ENCODE measurements at regions of chr5 and their contacts with region 1.

Region 1: DNA sequence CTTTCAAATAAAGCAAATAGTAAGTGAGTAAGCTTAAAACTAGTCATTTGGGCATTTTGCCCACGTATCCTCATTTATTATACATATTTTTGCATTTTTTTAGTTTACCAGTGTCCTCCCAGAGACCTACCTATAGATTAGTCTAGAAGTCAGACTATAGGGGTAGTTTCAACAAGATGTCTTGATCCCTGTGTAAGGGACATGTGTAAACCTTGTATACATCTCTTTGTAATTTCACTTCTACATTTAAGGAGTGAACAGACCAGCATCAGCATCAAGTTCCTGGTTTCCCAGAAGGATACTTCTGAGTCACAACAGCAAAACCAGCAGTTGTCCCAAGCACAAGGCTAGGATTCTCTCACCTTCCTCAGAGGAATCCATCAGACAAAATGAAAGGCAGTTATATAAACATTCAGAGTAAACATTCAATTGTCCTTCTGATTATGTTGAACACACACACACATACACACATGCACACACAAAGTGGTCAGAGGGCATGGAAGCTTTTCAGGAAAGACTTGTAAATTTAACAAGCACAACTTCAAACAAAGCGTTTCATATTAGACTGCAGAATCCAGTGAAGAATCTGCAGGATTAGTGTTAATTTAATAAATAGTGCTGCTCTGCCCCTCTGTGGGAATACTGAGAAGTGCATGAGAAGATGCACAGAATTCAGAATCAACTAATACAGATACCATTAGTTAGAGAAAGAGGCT is 55.4 kb downstream of the HINT1 start:
- DNase-seq: peak in 2 of 5 donors; percentile 32 to 35
- H3K4me3 ChIP-seq: no peak overlapping the region
- H3K4me3 Mint-ChIP-seq: no peak overlapping the region
- H3K27ac ChIP-seq: no peak overlapping the region
- H3K27ac Mint-ChIP-seq: no peak overlapping the region
- H3K4me1 ChIP-seq: no peaks in the 10 kb centered on the region
- H3K4me1 Mint-ChIP-seq: peaks cover 3 to 8% (median 8%) of the 10 kb centered on the region in 3 donors
- H3K27me3 ChIP-seq: no peaks in the 10 kb centered on the region
- H3K27me3 Mint-ChIP-seq: no peaks in the 10 kb centered on the region

Region 2: DNA sequence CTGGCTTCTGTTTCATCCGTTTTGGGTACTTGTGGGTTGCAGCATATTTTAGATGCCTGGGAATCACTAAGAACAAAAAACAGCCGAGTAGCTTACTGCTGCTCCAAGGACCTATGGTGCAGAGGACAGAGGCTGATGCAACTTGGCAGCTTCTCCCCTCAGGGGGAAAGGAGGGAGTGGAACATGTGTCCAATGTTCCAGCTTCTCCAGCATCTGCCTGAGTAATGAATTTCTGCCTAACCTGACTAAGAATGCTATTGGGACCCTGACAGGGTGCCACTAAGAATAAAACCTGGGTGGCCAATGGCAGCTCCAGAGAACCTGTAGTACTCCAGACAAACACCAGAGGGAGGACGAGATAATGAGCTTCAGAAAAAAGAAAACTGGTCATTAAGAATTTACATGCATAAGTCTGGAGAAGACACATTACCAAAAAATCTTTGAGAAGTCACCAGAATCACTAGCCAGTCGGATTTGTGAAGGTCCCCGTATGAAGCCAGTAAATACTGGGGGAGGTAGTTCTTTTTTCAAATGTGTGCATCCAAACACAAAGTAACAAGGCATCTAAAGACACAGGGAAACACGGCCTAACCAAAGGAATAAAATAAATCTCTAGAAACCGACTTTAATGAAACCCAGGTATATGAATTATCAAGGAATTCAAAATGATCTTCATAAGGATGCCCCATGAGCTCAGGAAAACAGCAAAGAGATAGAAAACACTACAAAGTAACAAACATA is 238.2 kb before region 1 on chr5:
- CTCF ChIA-PET with region 1: interaction called, 21 read pairs
- POLR2A ChIA-PET with region 1: no interaction called
- DNase-seq: peak; percentile 7 to 54 (median 24)
- H3K4me3 ChIP-seq: no peak overlapping the region
- H3K4me3 Mint-ChIP-seq: no peak overlapping the region
- H3K27ac ChIP-seq: no peak overlapping the region
- H3K27ac Mint-ChIP-seq: peak overlapping the region in 2 of 8 donors; percentile 5 to 21
- H3K4me1 ChIP-seq: no peaks in the 10 kb centered on the region
- H3K4me1 Mint-ChIP-seq: no peaks in the 10 kb centered on the region
- H3K27me3 ChIP-seq: no peaks in the 10 kb centered on the region
- H3K27me3 Mint-ChIP-seq: no peaks in the 10 kb centered on the region

Region 3: DNA sequence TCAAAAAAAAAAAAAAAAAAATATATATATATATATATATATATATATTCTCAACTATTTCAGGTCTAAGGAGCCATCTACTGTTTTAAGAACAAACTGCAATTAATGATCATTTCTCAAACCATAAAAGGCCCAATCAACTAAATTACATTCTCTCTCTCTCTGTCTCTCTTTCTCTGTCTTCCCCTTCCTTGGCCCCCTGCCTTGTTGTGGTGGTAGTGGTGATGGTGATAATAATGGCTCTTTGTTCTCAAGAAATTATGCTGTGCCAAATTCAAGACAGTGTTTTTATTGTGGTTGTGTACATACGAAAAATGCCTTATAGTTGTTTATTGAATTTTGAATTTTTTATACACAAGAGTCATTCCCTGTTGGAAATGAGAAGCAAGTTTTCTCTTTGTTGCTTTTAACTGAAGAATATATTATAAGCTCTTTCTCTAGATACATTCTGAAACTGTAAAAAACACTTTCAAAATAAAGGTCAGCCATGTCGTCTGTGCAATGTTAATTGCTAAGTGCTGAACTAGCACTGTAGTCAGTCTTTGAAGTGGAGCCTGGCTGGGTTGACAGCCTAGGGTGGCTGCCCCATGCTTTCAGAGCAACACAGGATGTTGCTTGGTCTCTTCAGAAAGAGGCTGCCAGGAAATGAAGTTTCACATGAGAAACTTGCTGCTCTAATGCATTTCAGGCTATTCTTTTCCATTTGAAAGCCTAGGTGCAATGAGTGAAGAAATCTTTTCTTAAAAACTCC is 40.6 kb before region 1 on chr5:
- CTCF ChIA-PET with region 1: no interaction called
- POLR2A ChIA-PET with region 1: no interaction called
- DNase-seq: peak; percentile 26 to 77 (median 63)
- H3K4me3 ChIP-seq: no peak overlapping the region
- H3K4me3 Mint-ChIP-seq: peak overlapping the region; percentile 66 to 87 (median 71)
- H3K27ac ChIP-seq: no peak overlapping the region
- H3K27ac Mint-ChIP-seq: peak overlapping the region; percentile 86 to 95 (median 90)
- H3K4me1 ChIP-seq: peaks cover 35% of the 10 kb centered on the region
- H3K4me1 Mint-ChIP-seq: peaks cover 49 to 57% (median 54%) of the 10 kb centered on the region in 3 donors
- H3K27me3 ChIP-seq: no peaks in the 10 kb centered on the region
- H3K27me3 Mint-ChIP-seq: no peaks in the 10 kb centered on the region

Region 4: GRCh38 chr5:131193106-131193505 is 83.4 kb after region 1 on chr5:
- CTCF ChIA-PET with region 1: no interaction called
- POLR2A ChIA-PET with region 1: no interaction called
- DNase-seq: no peak
- H3K4me3 ChIP-seq: no peak overlapping the region
- H3K4me3 Mint-ChIP-seq: no peak overlapping the region
- H3K27ac ChIP-seq: no peak overlapping the region
- H3K27ac Mint-ChIP-seq: peak overlapping the region in 3 of 8 donors; percentile 22 to 36 (median 26)
- H3K4me1 ChIP-seq: no peaks in the 10 kb centered on the region
- H3K4me1 Mint-ChIP-seq: peaks cover 4 to 18% (median 9%) of the 10 kb centered on the region in 3 donors
- H3K27me3 ChIP-seq: no peaks in the 10 kb centered on the region
- H3K27me3 Mint-ChIP-seq: no peaks in the 10 kb centered on the region

Region 5: GRCh38 chr5:131281133-131281867 is 171.6 kb after region 1 on chr5:
- CTCF ChIA-PET with region 1: no interaction called
- POLR2A ChIA-PET with region 1: no interaction called
- DNase-seq: peak in 2 of 5 donors; percentile 85 to 88
- H3K4me3 ChIP-seq: peak overlapping the region; percentile 55
- H3K4me3 Mint-ChIP-seq: peak overlapping the region; percentile 68 to 84 (median 79)
- H3K27ac ChIP-seq: peak overlapping the region; percentile 34
- H3K27ac Mint-ChIP-seq: peak overlapping the region; percentile 66 to 96 (median 83)
- H3K4me1 ChIP-seq: peaks cover 86% of the 10 kb centered on the region
- H3K4me1 Mint-ChIP-seq: peaks cover 81 to 93% (median 89%) of the 10 kb centered on the region in 3 donors
- H3K27me3 ChIP-seq: no peaks in the 10 kb centered on the region
- H3K27me3 Mint-ChIP-seq: peaks cover 0 to 21% of the 10 kb centered on the region in 2 donors

Measured in CD8-positive, alpha-beta memory T cell (primary cell).